ENCODE measurements at regions of chr16 and their contacts with region 1.

Region 1: GRCh38 chr16:77788181-77789084 is at the start of gene VAT1L:
- DNase-seq: peak; percentile 23 to 30
- ATAC-seq: peak; percentile 81 to 93 (median 88)
- H3K4me3 ChIP-seq: peak within 1 kb of the TSS; percentile 45 to 70 (median 64)
- H3K27ac ChIP-seq: no peak within 1 kb of the TSS
- H3K4me1 ChIP-seq: peaks cover 0 to 20% (median 8%) of the 10 kb centered on the region in 9 donors
- H3K27me3 ChIP-seq: peaks cover 4 to 70% (median 49%) of the 10 kb centered on the region in 7 donors
- CTCF ChIP-seq: no peak
- total RNA-seq, gene VAT1L: 7.3 to 61.0 (median 28.0) TPM

Region 2: DNA sequence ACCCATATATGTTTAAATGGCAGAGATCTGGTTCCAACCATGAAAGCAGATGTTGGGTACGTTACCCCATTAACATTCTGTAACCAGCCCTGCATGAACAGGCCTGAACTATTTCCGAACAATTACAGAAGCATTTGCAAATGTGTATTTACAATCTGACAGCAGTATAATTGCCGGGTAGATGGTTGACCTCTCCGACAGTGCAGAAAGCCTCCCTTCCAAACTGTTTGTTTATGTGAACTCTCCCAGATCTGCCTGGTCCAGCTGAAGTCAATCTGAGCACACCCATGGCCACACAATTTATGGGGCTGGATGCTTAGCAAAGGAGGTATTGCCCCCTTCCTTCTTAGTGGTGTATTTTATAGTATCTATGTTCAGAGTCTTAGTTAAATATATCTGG is 44.3 kb before region 1 on chr16:
- intact Hi-C with region 1: loop called in 1 of 10 experiments (anchors 5 kb)
- DNase-seq: no peak
- ATAC-seq: no peak
- H3K4me3 ChIP-seq: no peak overlapping the region
- H3K27ac ChIP-seq: no peak overlapping the region
- H3K4me1 ChIP-seq: no peaks in the 10 kb centered on the region
- H3K27me3 ChIP-seq: no peaks in the 10 kb centered on the region
- CTCF ChIP-seq: no peak

Region 3: GRCh38 chr16:77840673-77841501 is 52.5 kb after region 1 on chr16:
- intact Hi-C with region 1: no loop called
- DNase-seq: no peak
- ATAC-seq: no peak
- H3K4me3 ChIP-seq: no peak overlapping the region
- H3K27ac ChIP-seq: no peak overlapping the region
- H3K4me1 ChIP-seq: peaks cover 0 to 17% (median 0%) of the 10 kb centered on the region in 9 donors
- H3K27me3 ChIP-seq: no peaks in the 10 kb centered on the region
- CTCF ChIP-seq: no peak

Region 4: DNA sequence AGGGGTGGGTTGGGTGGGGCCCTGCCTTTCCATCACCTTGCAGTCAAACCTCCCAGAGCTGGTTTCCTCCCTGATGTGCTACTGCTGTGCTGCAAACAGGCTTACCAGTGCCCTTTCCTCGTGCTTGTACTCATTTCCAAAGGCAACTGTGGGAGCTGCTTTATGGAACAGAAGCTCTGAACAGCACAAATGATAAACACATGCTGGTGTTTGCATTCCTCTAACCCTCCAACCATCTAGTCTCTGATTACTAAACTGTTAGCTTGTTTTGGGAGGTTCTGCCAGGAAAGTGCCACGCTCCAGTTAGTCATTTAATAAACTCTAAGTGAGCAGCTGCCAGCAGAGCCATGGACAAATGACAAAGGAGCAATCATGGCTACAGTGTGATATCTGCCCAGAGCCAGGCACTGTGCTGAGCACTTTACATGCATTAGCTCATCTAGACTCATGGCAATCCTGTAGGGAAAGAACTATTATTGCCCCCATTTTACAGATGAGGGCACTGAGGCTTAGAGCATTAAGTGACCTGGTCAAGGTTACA is 110.3 kb after region 1 on chr16:
- intact Hi-C with region 1: loop called in 1 of 10 experiments (anchors 10 kb)
- DNase-seq: no peak
- ATAC-seq: peak in 2 of 8 donors; percentile 18 to 54
- H3K4me3 ChIP-seq: no peak overlapping the region
- H3K27ac ChIP-seq: peak overlapping the region in 3 of 10 donors; percentile 5 to 25 (median 14)
- H3K4me1 ChIP-seq: peaks cover 0 to 29% (median 7%) of the 10 kb centered on the region in 9 donors
- H3K27me3 ChIP-seq: no peaks in the 10 kb centered on the region
- CTCF ChIP-seq: no peak

Region 5: GRCh38 chr16:77946823-77947222 is 158.4 kb after region 1 on chr16:
- intact Hi-C with region 1: loop called in 1 of 10 experiments (anchors 10 kb)
- DNase-seq: no peak
- ATAC-seq: no peak
- H3K4me3 ChIP-seq: no peak overlapping the region
- H3K27ac ChIP-seq: no peak overlapping the region
- H3K4me1 ChIP-seq: peaks cover 0 to 10% (median 0%) of the 10 kb centered on the region in 9 donors
- H3K27me3 ChIP-seq: peaks cover 0 to 6% (median 0%) of the 10 kb centered on the region in 7 donors
- CTCF ChIP-seq: no peak

Region 6: GRCh38 chr16:78106686-78107085 is 318.3 kb after region 1 on chr16:
- intact Hi-C with region 1: no loop called
- DNase-seq: no peak
- ATAC-seq: peak in 4 of 8 donors; percentile 28 to 59 (median 49)
- H3K4me3 ChIP-seq: no peak overlapping the region
- H3K27ac ChIP-seq: no peak overlapping the region
- H3K4me1 ChIP-seq: no peaks in the 10 kb centered on the region
- H3K27me3 ChIP-seq: no peaks in the 10 kb centered on the region
- CTCF ChIP-seq: no peak